ENCODE measurements at regions of chr3 and their contacts with region 1.

Region 1: DNA sequence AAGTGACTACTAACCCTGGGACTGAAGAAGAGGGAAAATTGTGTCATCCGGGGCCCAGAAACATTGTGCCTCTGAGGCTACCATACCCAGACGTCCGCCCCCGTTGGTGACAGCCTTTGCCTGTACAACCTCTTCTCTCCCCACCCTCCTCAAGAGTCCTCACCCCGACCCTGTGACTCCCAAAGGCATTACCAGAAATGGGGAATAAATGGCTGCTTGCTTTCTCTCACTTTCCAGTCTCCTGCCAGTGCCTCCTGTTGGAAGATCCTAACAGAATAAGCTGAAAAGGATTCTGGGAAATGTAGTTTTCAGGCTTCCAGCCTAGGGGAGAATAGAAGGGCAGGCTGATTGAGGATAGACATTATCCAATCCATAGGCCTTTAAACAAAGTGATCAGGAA is 30.8 kb upstream of the SLC25A36 start:
- DNase-seq: no peak
- ATAC-seq: no peak
- H3K4me3 ChIP-seq: peak overlapping the region in 1 of 2 experiments; percentile 34; a peak in 2 of 4 replicates
- H3K27ac ChIP-seq: no peak overlapping the region
- H3K4me1 ChIP-seq: no peaks in the 10 kb centered on the region
- H3K27me3 ChIP-seq: peaks cover 11% of the 10 kb centered on the region; the same call in 1 of the 2 replicates
- CTCF ChIP-seq: no peak; the same call in 1 of the 2 replicates

Region 2: GRCh38 chr3:140883428-140884040 is 27.3 kb before region 1 on chr3:
- CTCF ChIA-PET with region 1: no interaction called
- POLR2A ChIA-PET with region 1: interaction called, 12 read pairs
- in situ Hi-C with region 1: no loop called
- intact Hi-C with region 1: no loop called
- DNase-seq: no peak
- ATAC-seq: no peak
- H3K4me3 ChIP-seq: no peak overlapping the region
- H3K27ac ChIP-seq: no peak overlapping the region
- H3K4me1 ChIP-seq: no peaks in the 10 kb centered on the region
- H3K27me3 ChIP-seq: no peaks in the 10 kb centered on the region
- CTCF ChIP-seq: no peak

Region 3: DNA sequence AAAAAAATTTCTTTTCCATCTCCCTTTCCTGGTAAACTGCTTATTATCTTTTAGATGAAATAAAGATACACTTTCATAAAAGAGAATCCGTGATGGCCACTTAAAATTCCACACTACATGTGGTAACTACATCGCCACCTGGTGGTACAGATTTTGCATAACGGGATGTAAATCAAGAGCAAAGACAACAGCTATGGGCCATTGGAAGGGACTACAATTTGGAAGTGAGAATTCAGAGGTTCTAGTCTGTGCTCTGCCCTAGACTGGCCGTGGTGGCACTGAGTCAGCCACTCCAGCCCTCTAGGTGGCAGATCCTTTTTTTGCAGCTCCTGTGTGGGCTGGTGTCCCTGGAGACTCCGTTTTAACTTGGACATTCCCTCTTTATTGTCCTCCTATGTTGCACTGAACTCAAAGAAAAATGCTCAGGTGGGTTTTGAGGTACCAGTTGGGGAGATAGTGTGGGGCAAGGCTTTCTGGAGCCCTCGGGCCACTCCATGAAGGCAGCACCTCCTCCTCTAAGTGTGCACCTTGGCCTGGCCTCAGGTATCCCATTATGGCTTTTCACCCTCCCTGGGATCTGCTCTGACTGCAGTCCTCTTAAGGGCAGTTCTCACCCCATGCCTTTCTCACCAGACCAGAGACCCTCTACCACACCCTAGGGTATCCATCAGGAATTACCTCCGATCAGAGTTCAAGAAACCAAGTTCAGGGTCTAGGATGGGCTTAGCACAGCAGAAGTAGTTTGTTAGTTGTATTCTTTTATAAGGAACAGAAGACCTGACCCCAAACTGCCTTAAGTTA is 195.2 kb after region 1 on chr3:
- CTCF ChIA-PET with region 1: no interaction called
- POLR2A ChIA-PET with region 1: no interaction called
- in situ Hi-C with region 1: no loop called
- intact Hi-C with region 1: loop called (anchors 10 kb)
- DNase-seq: peak; percentile 67
- ATAC-seq: peak; percentile 80
- H3K4me3 ChIP-seq: no peak overlapping the region
- H3K27ac ChIP-seq: no peak overlapping the region
- H3K4me1 ChIP-seq: no peaks in the 10 kb centered on the region
- H3K27me3 ChIP-seq: no peaks in the 10 kb centered on the region
- CTCF ChIP-seq: peak; percentile 85

Measured in Panc1 (cell line).